ENCODE measurements at regions of chr4 and their contacts with region 1.

Region 1: DNA sequence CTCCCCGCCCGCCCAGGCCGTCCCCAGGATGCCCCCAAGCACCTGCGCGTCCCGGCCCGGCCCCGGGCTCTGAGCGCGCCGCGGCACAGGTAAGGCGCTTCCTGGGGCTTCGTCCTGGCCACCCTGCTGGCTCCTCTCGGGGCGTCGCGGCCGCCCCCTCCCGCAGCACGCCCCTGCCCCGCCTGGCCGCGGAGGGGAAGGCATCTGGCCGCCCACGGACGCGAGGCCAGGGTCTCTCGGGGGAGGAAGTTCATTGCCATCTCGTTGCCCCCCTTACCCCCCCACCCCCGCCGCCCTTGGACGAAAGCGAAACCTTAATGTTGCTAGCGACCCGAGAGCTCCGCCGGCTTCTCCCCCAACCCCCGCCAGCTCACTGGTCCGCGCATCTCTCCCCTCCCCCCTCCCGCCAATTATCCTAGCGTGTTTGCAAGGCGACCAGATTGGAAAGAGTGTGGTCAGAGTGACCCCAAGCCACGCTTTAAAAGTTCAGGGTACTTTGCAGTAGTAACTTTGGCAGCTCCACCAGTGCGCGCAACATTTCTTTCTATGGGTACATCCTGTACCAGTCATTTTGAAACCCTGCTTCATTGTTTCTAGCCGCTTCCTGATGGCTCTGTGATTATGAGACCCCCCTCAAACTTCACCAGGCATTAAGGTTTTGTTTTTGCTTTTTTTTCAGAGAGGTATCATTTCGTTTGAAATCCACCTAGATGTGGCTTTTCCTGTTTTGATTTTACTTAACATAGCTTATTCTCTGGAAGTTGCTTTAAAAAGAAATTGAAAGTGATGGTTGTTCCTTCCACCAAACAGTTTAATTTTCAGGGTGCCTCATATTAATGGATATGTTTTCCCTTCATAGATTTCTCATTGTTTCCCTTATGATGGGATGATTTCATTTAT is 626 bp downstream of the TBC1D1 start:
- DNase-seq: peak; percentile 82

Region 2: DNA sequence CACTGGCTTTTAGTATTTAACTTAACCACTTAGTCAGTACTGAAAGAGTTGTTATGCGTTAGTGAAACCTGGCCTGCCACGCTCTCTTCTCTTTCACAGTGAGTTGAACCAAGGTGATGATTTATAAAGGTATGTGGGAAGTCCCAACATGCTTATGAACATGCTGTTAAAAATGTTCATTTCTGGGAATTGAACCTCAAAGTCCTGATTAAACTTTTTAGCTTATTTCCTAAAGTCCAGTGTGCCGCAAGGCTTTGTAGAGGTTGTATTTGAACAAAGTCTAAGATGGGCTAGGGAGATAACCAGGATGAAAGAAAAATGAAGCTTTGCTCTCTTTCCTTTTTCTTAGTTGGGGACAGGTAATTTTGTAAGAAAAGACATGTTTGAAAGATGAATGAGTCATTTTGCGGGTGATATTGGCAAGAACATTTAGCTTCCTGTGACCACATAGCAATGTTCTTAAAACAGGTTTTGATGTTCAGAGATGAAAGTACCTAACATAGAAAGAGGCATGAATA is 1339.8 kb before region 1 on chr4:
- intact Hi-C with region 1: no loop called
- DNase-seq: no peak

Region 3: DNA sequence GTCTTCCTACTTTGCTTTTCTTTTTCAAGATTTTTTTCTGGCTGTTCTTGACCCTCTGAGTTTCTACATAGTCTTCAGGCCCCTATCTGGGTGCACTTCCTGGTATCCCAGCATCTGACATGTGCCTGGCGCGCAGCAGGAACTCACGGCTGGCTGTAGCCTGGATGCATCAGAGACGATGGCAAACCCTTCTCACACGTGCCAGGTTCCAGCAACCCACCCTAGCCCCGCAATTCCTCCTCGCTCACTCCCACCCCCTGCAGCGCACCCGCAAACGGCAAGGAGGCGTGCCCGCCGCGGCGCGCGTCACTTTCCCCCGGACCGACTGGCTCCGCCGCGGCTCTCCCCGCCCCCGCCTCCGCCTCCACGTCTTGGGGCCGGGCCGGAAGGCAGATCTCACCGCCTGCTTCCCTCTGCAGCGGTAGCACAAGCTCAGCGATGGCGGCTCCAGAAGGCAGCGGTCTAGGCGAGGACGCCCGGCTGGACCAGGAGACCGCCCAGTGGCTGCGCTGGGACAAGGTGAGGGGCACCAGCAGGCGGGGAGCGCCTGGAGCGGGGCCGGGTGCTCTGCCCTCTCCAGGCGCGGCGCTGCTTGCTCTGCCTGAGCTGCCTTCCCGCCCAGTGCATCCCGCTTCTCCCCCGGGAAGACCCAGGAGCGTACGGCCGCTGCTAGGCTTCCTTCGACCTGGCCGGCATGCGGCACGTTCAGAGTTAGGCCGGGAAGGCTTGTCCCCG is 65.0 kb before region 1 on chr4 and contains the start of gene PGM2:
- intact Hi-C with region 1: loop called in 1 of 2 experiments (anchors 10 kb)
- DNase-seq: peak; percentile 97
- total RNA-seq, gene PGM2: 20.3 to 24.2 TPM

Region 4: GRCh38 chr4:37858872-37859271 is 32.6 kb before region 1 on chr4:
- intact Hi-C with region 1: loop called in 1 of 2 experiments (anchors 1 kb)
- DNase-seq: no peak

Region 5: GRCh38 chr4:37879365-37879764 is 12.1 kb before region 1 on chr4:
- intact Hi-C with region 1: no loop called
- DNase-seq: no peak

Region 6: DNA sequence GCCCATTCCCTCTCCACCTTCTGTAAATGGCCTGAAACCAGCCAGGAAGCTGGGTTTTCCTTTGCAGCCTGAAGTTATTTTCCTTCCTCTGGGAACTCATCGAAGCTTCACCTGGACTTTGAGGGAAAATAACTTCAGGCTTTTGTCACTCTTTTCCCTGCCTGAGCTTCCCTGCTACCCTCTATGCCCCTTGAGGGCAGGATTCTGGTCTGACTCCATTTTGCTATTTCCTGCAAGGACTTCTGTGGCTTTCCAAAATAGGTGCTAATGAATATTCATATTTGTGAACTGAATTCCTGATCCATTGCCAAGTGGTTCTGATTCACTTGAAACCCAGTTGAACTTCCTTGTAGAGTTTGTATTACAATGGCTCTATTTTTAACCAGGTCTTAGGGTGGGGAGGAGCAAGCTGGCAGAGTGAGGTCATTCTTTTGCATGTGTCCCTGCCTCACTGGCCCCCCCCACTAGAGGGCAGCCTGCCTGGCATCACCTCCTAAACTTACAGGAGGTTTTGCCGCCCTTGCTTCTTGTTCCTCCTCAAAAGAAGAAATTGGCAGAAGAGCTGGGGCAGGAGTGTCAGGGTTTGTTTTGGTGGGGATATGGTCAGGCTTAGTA is 79.1 kb after region 1 on chr4:
- intact Hi-C with region 1: loop called (anchors 5 to 10 kb)
- DNase-seq: peak; percentile 93

Region 7: DNA sequence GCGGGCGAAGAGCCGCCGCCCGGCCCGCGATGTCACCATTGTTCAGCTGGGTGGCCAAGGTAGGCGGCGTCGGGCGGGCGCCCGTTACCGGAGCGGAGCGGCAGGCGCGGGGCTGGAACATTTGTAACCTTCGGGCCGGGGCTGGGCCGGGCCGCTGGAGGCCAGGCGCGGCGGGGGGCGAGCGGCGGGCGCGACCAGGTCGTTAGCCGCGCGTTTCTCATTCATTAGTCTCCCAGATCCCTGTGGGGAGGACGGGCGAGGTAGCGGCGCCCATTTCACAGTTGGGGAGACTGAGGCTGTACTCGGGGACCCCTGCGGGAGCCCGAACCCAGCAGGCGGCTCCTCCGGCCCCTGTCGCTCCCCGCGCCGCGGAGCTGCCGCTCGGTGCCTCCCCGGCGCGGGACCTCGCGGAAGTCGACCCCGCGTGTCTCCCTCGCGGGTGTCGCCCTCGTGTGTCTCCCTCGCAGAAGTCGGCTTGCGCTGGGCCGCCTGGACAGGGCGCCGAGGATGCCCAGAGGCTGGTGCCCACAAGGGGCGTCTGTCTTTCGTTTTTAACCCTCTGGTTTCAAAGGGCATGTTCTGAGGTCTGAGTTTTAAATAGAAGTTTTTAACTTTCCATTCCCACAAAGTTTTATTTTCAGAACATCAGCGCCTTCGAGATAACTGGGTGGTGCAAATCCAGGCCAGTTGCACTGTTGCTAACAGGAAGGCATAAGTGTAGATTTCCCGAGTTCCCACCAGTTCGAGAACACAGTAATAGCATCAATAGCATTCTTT is 86.1 kb after region 1 on chr4:
- intact Hi-C with region 1: loop called (anchors 5 to 10 kb)
- DNase-seq: peak; percentile 93